ENCODE measurements at regions of chr5 and their contacts with region 1.

Region 1: DNA sequence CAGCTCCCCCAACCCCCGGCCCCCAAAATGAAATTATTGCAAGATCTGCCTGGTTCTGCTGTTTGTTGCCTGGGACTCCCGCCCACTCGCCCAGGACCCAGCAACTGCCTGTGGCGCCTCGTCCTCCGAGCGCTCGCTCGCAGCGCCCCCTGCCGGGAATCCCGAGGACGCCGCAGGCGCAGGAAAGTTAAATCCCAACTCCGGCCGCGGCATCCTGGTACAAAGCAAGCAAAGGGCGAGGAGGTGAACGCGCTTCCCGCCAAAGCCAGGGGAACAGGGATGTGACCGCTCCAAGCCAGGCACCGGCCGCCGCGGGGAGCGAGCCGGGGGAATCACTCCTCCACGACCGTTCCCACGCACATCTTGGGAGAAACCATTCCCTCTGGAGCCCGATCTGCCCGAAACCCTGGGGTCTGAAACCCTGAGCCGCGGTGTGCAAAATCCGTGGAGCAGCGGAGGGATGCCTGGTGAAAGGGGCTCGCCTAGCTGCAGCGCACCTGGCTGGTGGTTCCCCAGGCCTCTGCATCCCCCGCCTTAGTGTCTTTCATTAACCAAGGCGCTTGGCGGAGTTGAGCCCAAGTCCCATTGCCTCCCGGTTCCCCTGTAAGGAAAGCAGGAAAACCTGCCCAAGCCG is 1.3 kb downstream of the SEMA5A start:
- DNase-seq: peak; percentile 72 to 97 (median 86)

Region 2: GRCh38 chr5:9239626-9240025 is 305.0 kb before region 1 on chr5:
- intact Hi-C with region 1: loop called (anchors 10 kb)
- DNase-seq: no peak

Region 3: DNA sequence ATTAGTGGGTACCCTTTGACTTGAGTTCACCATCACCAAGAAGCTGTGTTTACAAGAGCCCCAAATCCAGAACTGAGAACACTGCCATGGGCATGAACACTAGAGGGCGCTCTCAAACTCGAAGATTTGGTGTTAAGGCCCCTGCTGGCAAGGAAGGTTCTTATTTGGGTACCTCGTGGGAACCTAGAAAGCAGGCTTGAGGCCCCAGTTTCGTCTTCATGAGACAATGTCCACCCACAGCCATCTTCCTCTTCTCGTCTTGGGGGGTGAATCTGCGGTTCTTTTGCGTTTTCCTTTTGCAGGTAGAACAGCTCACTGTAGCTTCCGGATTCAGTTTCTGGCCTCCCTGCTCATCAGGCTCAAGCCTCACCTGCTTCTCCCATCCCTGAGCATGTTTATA is 182.8 kb before region 1 on chr5:
- intact Hi-C with region 1: loop called (anchors 1 kb)
- DNase-seq: peak in 6 of 10 donors; percentile 15 to 88 (median 50)

Region 4: GRCh38 chr5:9596171-9596780 is 51.7 kb after region 1 on chr5:
- intact Hi-C with region 1: no loop called
- DNase-seq: no peak

Measured in posterior cingulate gyrus (tissue), 11 donors.